Lower lobe of right lung (tissue), 2 donors: ENCODE measurements at regions of chr1 and their contacts with region 1.

Region 1: GRCh38 chr1:201515895-201516294 is 9.0 kb upstream of the CSRP1 start:
- DNase-seq: no peak
- ATAC-seq: no peak
- H3K4me3 ChIP-seq: no peak overlapping the region
- H3K27ac ChIP-seq: no peak overlapping the region
- H3K4me1 ChIP-seq: peaks cover 23% of the 10 kb centered on the region
- H3K27me3 ChIP-seq: no peaks in the 10 kb centered on the region
- CTCF ChIP-seq: no peak

Region 2: DNA sequence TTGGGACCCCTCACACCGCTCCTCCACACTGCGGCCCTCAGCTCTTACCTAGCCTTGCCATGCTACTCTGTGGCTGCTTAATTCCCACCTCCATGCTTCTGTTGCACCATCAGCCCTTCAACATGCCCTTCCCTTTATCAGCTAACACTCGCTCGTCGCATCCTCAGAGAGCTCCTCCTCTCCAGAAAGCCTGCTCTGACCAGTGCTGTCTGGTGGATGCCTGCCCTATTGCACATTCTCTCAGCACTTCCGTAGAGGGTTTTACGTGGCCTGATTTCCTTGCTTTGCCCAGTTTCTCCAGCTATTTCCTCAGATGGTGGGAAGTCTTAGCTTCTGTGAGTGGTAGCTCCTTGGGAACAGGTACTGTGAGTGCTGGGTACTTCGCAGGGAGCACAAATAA is 106.5 kb before region 1 on chr1:
- intact Hi-C with region 1: no loop called
- DNase-seq: no peak
- ATAC-seq: no peak
- H3K4me3 ChIP-seq: no peak overlapping the region
- H3K27ac ChIP-seq: no peak overlapping the region
- H3K4me1 ChIP-seq: peaks cover 8% of the 10 kb centered on the region
- H3K27me3 ChIP-seq: no peaks in the 10 kb centered on the region
- CTCF ChIP-seq: no peak

Region 3: DNA sequence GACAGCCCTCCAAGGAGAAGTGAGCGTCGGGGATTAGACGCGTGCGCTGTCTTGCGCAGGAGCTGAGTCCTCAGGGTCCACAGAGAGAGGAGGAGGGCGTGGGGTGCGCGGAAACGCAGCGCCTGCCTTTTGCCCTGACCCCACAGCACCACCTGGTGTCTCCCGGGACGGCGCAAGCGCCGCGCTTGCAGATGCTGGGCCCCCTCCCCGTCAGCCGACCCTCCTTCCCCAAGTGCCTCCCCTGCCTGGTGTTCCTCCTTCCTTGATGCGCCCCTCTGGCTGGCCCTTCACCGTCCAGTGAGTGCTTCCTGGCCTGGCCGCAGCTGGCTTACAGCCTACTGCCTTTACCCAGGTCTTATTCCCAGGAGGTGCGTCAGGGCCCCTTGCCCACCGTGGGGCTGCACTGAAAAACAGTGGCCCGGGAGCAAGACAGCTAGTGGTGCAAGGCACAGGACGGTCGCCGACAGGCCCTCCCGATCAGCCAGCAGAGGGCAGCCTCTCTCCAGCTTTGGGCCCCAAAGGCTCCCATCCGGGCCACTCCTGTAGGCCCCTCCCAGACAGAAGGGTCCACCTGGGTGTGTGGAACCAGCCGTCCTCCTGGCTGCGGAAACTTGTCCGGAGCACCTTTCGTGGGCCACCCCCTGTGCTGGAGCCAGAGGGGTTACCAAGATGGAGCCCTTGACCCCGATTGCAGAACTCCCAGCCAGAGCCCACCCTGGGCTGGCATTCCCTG is 34.0 kb before region 1 on chr1:
- intact Hi-C with region 1: loop called (anchors 5 kb)
- DNase-seq: peak; percentile 90
- ATAC-seq: peak; percentile 87 to 91
- H3K4me3 ChIP-seq: peak overlapping the region; percentile 50
- H3K27ac ChIP-seq: no peak overlapping the region
- H3K4me1 ChIP-seq: peaks cover 35% of the 10 kb centered on the region
- H3K27me3 ChIP-seq: no peaks in the 10 kb centered on the region
- CTCF ChIP-seq: peak; percentile 96